ENCODE measurements at regions of chr7 and their contacts with region 1.

Region 1: GRCh38 chr7:29764227-29764626 is 42.1 kb upstream of the WIPF3 start:
- DNase-seq: peak in 2 of 4 experiments; percentile 33 to 34
- ATAC-seq: peak; percentile 87
- H3K4me3 ChIP-seq: no peak overlapping the region
- H3K27ac ChIP-seq: no peak overlapping the region
- H3K4me1 ChIP-seq: no peaks in the 10 kb centered on the region
- H3K27me3 ChIP-seq: peaks cover 0 to 4% of the 10 kb centered on the region in 2 experiments; a peak in 3 of 5 replicates
- CTCF ChIP-seq: peak; percentile 56 to 69 (median 61)
- EP300 ChIP-seq: no peak
- POLR2A ChIP-seq: no peak
- RAD21 ChIP-seq: peak; percentile 57 to 82

Region 2: DNA sequence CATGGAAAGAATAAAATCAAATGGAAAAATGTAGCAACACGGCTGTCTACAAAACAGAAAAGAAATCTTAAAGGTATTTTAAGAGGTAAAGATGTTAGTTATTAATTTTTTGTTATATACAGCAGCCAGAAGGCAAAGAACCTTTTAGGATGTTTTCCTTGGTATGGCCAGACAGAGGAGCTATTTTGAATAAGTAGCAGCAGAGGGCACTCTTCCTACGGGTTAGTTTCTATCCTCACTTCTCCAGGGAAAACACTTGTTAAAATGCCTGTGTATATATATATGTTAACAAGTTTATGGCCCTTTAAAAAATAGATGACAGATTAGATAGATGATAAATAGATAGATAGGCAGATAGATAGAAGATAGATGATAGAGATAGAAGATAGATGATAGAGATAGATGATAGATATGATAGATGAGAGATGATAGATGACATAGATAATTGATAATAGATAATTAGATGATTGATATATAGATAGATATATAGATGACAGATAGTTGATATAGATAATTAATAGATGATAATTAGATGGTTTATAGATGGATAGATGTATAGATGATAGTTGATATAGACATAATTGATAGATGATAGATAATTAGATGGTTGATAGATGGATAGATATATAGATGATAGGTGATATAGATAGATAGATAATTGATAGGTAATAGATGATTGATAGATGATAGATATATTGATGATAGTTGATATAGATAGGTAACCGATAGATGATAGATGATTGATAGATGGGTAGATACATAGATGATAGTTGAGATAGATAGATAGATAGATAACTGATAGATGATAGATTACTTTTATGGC is 15.7 kb before region 1 on chr7:
- CTCF ChIA-PET with region 1: no interaction called
- POLR2A ChIA-PET with region 1: no interaction called
- in situ Hi-C with region 1: no loop called
- intact Hi-C with region 1: no loop called
- DNase-seq: peak in 1 of 4 experiments; percentile 73
- ATAC-seq: peak; percentile 77
- H3K4me3 ChIP-seq: no peak overlapping the region
- H3K27ac ChIP-seq: no peak overlapping the region
- H3K4me1 ChIP-seq: peaks cover 6 to 15% of the 10 kb centered on the region in 2 experiments; a peak in 2 of 5 replicates
- H3K27me3 ChIP-seq: no peaks in the 10 kb centered on the region; a peak in 2 of 5 replicates
- CTCF ChIP-seq: peak; percentile 59 to 72 (median 70)
- EP300 ChIP-seq: no peak
- POLR2A ChIP-seq: no peak
- RAD21 ChIP-seq: peak; percentile 66 to 86

Region 3: GRCh38 chr7:29806208-29806994 is 42.2 kb after region 1 on chr7 and contains the start of gene WIPF3:
- CTCF ChIA-PET with region 1: no interaction called
- POLR2A ChIA-PET with region 1: no interaction called
- in situ Hi-C with region 1: no loop called
- intact Hi-C with region 1: loop called (anchors 2 kb)
- DNase-seq: peak; percentile 61 to 89 (median 82)
- ATAC-seq: peak; percentile 86
- H3K4me3 ChIP-seq: peak within 1 kb of the TSS; percentile 52
- H3K27ac ChIP-seq: peak within 1 kb of the TSS; percentile 24; the same call in 1 of the 3 replicates
- H3K4me1 ChIP-seq: peaks cover 8 to 27% of the 10 kb centered on the region in 2 experiments; a peak in 4 of 5 replicates
- H3K27me3 ChIP-seq: peaks cover 0 to 15% of the 10 kb centered on the region in 2 experiments; a peak in 1 of 5 replicates
- CTCF ChIP-seq: peak in 2 of 3 experiments; percentile 1; a peak in 1 of 6 replicates
- EP300 ChIP-seq: no peak
- POLR2A ChIP-seq: no peak
- RAD21 ChIP-seq: no peak; a peak in 1 of 4 replicates
- polyA plus RNA-seq, gene WIPF3: 2.1 to 3.2 TPM

Region 4: DNA sequence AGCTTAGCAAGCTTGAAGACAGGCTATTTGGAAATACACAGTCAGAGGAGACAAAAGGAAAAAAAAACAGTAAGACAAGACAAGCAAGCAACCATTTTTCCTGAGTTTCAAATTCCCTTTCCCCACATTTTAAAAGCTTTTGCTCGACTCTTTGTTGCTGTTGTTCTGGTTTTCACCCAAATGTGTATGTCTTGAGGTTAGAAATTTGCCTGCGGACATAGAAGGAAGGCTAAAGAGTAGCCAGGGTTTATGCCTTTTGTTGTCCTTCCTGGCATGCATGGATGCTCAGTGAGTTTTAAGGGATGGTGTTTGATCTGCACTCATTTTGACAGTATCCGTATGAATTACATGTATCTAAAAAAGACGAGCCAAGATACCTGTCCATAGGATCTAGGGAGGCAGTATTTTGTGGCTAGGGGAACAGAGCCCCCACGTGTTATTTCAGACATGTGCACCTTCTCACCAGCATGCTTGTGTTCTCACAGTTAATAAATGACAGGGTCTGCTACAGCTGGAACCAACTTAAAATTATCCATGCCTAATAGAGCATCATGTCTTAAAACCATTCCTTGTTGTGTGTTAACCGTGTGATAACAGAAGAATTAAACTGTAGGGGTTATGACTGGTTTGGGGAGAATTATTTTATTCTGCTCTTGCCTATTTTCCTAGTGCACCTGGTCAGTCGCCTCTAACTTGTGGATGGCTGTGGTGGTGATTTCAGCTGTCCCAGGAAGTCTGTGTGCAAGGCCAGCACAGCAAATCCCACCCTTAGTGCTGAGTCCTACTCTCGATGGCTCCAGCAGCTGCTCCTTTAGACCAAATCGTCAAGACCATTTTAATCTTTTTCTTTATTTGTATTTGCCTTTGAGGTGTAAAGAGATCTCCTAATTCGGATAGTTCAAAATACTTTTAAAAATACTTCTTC is 51.2 kb after region 1 on chr7:
- CTCF ChIA-PET with region 1: no interaction called
- POLR2A ChIA-PET with region 1: no interaction called
- in situ Hi-C with region 1: no loop called
- intact Hi-C with region 1: loop called (anchors 2 kb)
- DNase-seq: no peak
- ATAC-seq: peak; percentile 77
- H3K4me3 ChIP-seq: no peak overlapping the region
- H3K27ac ChIP-seq: no peak overlapping the region
- H3K4me1 ChIP-seq: no peaks in the 10 kb centered on the region; a peak in 1 of 5 replicates
- H3K27me3 ChIP-seq: no peaks in the 10 kb centered on the region
- CTCF ChIP-seq: peak; percentile 17 to 41 (median 24); a peak in 2 of 6 replicates
- EP300 ChIP-seq: no peak
- POLR2A ChIP-seq: no peak
- RAD21 ChIP-seq: peak in 1 of 2 experiments; percentile 63; a peak in 2 of 4 replicates